ENCODE measurements at regions of chr6 and their contacts with region 1.

Region 1: GRCh38 chr6:53128842-53129241 is 19.8 kb downstream of the GCM1 start:
- DNase-seq: no peak
- H3K4me3 ChIP-seq: no peak overlapping the region
- H3K27me3 ChIP-seq: peaks cover 4% of the 10 kb centered on the region; the same call in 1 of the 2 replicates
- CTCF ChIP-seq: no peak

Region 2: GRCh38 chr6:52910091-52910490 is 218.8 kb before region 1 on chr6:
- CTCF ChIA-PET with region 1: no interaction called
- POLR2A ChIA-PET with region 1: interaction called, 12 read pairs
- DNase-seq: no peak
- H3K4me3 ChIP-seq: no peak overlapping the region
- H3K27me3 ChIP-seq: no peaks in the 10 kb centered on the region
- CTCF ChIP-seq: no peak

Region 3: GRCh38 chr6:53139841-53140413 is 11.1 kb after region 1 on chr6:
- CTCF ChIA-PET with region 1: no interaction called
- POLR2A ChIA-PET with region 1: no interaction called
- DNase-seq: no peak
- H3K4me3 ChIP-seq: no peak overlapping the region
- H3K27me3 ChIP-seq: peaks cover 7% of the 10 kb centered on the region
- CTCF ChIP-seq: no peak

Measured in BJ (cell line).